ENCODE measurements at regions of chr5 and their contacts with region 1.

Region 1: DNA sequence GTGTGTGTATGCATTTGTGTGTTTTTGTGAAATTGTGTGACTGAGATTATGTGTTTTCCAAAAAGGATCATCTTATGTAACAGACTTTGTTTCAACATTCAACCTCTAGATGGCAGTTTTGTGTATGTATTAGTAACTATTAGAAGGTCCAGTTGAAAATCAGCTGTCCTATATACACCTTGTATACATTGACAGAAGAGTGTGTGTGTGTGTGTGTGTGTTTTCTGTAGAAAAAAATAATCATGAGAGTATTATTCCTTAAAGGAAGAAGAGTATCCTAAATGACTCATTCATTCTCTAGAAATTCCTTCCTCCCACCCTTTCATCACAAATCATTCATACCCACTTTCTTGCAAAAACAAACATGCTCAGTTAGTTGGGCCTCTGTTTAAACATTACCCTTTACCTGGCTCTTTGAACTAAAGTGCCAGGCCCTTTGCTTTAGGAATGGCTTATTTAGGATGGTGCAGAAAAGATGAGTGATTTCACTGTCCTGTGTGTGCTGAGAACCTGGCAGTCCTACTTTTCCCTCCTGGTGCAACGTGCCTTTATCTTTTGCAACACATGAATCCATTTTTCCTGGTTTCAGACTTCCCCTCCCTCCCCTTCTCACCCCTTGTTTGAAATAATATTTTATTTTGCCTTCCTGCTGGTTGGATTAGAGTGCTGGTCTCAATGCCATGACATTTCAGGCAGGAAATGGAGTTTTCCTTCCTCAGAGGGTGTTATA is 152.2 kb downstream of the ARHGAP26 start:
- DNase-seq: no peak
- H3K4me3 ChIP-seq: no peak overlapping the region
- H3K27ac ChIP-seq: no peak overlapping the region
- H3K4me1 ChIP-seq: peaks cover 14% of the 10 kb centered on the region
- H3K27me3 ChIP-seq: no peaks in the 10 kb centered on the region
- CTCF ChIP-seq: peak; percentile 32 to 41

Region 2: GRCh38 chr5:142334538-142334937 is 587.9 kb before region 1 on chr5:
- CTCF ChIA-PET with region 1: no interaction called
- dilution Hi-C with region 1: no loop called
- in situ Hi-C with region 1: no loop called
- intact Hi-C with region 1: no loop called
- DNase-seq: no peak
- H3K4me3 ChIP-seq: no peak overlapping the region
- H3K27ac ChIP-seq: no peak overlapping the region
- H3K4me1 ChIP-seq: no peaks in the 10 kb centered on the region
- H3K27me3 ChIP-seq: no peaks in the 10 kb centered on the region
- CTCF ChIP-seq: no peak

Region 3: GRCh38 chr5:143002459-143003328 is 80.3 kb after region 1 on chr5:
- CTCF ChIA-PET with region 1: no interaction called
- dilution Hi-C with region 1: no loop called
- in situ Hi-C with region 1: loop called in 1 of 2 experiments (anchors 10 kb)
- intact Hi-C with region 1: loop called (anchors 5 kb)
- DNase-seq: peak; percentile 59
- H3K4me3 ChIP-seq: no peak overlapping the region
- H3K27ac ChIP-seq: peak overlapping the region; percentile 71
- H3K4me1 ChIP-seq: peaks cover 17% of the 10 kb centered on the region
- H3K27me3 ChIP-seq: no peaks in the 10 kb centered on the region
- CTCF ChIP-seq: peak; percentile 59 to 72

Region 4: DNA sequence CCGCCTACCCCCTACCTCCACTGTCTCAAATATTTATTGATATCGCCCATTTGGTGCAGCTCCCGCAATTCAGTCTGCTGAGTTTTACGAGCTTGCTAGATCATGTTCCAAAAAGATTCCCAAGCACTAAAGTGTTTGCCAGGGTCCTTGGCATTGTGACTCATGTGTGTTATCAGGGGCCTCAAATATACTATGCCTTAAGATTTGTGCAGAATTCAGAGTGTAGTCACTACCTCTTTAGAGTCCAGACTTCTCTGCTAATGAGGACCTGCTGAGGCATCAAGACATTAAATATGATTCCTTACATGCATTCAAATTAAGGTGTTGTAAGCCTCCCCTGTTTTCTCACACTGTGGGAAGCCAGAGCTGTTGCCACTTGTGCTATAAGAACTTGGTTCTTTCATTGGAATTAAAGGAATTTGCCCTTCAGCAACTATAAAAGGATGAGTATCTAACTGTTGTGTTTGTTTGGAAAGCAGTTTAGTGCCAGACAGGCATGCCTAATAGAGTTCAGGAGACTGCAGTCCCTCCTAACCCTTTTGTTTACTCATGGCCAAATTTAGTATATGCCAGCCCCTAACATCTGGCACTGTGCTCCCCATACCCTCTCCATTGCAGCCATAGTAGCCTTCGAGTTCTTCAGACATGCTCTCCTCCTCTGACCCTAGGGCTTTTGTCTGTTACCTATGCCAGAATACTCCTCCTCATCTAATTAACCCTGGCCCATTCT is 164.7 kb after region 1 on chr5:
- CTCF ChIA-PET with region 1: no interaction called
- dilution Hi-C with region 1: no loop called
- in situ Hi-C with region 1: no loop called
- intact Hi-C with region 1: loop called (anchors 10 kb)
- DNase-seq: peak; percentile 78
- H3K4me3 ChIP-seq: no peak overlapping the region
- H3K27ac ChIP-seq: peak overlapping the region; percentile 36
- H3K4me1 ChIP-seq: peaks cover 20% of the 10 kb centered on the region
- H3K27me3 ChIP-seq: no peaks in the 10 kb centered on the region
- CTCF ChIP-seq: no peak

Region 5: DNA sequence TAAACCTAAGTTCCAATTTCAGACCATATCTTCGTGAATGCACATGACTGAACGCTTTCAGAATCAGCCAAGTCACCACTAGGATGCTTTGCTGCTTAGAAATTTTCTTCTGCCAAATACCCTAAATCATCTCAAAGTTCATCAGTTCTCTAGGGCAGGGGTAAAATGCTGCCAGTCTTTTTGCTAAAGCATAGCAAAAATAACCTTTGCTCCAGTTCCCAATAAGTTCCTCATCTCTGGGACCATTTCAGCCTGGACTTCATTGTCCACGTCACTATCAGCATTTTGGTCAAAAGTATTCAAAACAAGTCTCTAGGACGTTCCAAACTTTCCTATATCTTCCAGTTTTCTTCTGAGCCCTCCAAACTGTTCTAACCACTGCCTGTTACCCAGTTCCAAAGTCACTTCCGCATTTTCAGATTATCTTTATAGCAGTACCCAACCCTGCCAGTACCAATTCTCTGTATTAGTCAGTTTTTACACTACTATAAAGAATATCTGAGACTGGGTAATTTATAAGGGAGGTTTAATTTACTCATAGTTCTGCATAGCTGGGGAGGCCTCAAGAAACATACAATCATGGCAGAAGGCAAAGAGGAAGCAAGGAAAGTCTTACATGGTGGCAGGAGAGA is 406.3 kb after region 1 on chr5:
- CTCF ChIA-PET with region 1: no interaction called
- dilution Hi-C with region 1: no loop called
- in situ Hi-C with region 1: no loop called
- intact Hi-C with region 1: no loop called
- DNase-seq: no peak
- H3K4me3 ChIP-seq: no peak overlapping the region
- H3K27ac ChIP-seq: no peak overlapping the region
- H3K4me1 ChIP-seq: peaks cover 3% of the 10 kb centered on the region
- H3K27me3 ChIP-seq: no peaks in the 10 kb centered on the region
- CTCF ChIP-seq: no peak

Region 6: DNA sequence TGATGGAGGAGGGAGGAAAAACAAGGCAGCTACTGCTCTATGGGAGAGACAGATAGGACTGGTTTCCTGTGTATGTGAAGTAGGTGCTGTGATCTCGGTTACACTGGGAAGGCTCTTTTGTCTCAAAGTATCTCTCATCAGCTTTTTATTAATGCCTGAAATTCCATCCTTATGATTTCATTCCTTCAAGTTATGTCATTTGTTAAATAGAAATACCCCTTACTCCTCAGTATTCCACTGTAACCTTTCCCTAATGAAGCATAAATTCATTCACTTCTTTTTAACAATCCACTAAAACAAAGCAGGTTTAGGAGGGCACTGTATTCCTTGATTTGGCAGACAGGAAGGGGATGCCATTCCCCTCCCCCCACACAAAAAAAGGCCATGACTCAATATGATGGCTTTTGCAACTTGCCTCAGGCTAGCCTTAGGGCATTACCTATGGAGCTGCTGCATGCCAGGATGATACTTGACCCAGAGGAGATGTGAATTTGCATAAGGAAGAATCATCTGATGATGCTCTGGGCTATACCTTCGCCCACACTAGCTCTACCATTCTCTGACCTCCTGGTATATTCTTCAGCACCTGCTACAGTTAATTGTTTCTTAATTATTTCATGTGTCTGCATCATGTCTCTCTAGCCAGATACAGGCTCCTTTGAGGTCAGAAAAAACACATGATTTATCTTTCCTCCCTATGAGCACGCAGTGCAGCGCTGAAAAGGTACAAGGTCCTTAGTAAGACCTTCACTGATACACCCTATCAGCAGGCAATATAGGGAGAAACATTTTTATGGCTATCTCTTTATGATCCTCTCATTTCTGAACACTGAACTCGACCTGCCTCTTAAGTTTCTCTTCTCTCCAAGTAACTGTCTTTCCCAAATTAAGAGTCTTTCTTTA is 454.8 kb after region 1 on chr5:
- CTCF ChIA-PET with region 1: no interaction called
- dilution Hi-C with region 1: no loop called
- in situ Hi-C with region 1: loop called in 1 of 2 experiments (anchors 25 kb)
- intact Hi-C with region 1: no loop called
- DNase-seq: peak; percentile 77
- H3K4me3 ChIP-seq: no peak overlapping the region
- H3K27ac ChIP-seq: peak overlapping the region; percentile 52
- H3K4me1 ChIP-seq: peaks cover 27% of the 10 kb centered on the region
- H3K27me3 ChIP-seq: no peaks in the 10 kb centered on the region
- CTCF ChIP-seq: no peak

Region 7: GRCh38 chr5:143968011-143968878 is 1045.9 kb after region 1 on chr5:
- CTCF ChIA-PET with region 1: no interaction called
- dilution Hi-C with region 1: no loop called
- in situ Hi-C with region 1: no loop called
- intact Hi-C with region 1: loop called (anchors 2 kb)
- DNase-seq: peak; percentile 70
- H3K4me3 ChIP-seq: no peak overlapping the region
- H3K27ac ChIP-seq: no peak overlapping the region
- H3K4me1 ChIP-seq: peaks cover 7% of the 10 kb centered on the region
- H3K27me3 ChIP-seq: no peaks in the 10 kb centered on the region
- CTCF ChIP-seq: peak; percentile 39 to 59